ENCODE measurements at regions of chr4 and their contacts with region 1.

Region 1: DNA sequence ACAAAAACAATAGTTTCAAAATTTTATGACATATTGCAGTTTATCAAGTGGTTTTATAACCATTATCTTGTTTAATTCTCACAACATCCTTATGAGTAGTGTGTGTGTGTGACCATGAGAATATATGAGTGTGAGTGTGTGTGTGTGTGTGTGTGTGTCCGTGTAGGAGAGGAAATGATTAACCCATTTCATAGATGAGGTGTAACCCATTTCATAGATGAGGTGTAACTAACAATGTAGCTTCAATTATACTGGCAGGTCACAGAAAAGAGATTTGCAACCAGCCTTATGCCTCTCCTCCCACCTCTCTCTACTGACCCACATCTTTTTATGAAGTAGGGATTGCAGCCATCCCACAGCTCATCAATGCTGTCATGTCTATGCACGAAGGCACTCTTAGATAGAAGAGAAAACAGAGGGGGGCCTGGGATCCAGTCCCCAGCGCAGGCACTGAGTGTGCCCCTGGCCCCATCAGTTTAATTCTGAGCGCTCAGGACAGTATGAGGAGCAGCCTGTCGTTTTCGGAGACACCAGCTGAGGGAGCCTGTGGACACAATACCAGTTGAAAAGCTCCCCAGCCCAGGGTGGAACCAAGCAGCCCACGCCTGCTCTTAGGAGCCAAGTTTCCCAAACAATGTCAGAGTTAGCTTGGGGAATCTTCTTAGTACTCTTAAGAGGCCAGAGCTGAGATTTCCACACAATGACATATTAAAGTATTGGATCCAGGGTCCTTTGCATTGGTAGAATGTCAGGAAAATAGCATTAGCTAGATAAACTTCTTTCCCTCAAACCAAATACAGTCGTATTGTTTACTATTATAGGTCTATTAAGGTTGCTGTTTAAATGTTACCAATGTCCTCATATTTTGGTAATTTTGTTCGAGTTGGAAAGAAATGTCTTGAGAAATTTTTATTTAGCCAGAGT is 88.6 kb downstream of the PALLD start:
- DNase-seq: peak; percentile 85 to 93 (median 87)
- ATAC-seq: peak; percentile 92 to 93
- H3K4me3 ChIP-seq: no peak overlapping the region
- H3K27ac ChIP-seq: no peak overlapping the region
- H3K4me1 ChIP-seq: peaks cover 6% of the 10 kb centered on the region
- H3K27me3 ChIP-seq: no peaks in the 10 kb centered on the region

Region 2: DNA sequence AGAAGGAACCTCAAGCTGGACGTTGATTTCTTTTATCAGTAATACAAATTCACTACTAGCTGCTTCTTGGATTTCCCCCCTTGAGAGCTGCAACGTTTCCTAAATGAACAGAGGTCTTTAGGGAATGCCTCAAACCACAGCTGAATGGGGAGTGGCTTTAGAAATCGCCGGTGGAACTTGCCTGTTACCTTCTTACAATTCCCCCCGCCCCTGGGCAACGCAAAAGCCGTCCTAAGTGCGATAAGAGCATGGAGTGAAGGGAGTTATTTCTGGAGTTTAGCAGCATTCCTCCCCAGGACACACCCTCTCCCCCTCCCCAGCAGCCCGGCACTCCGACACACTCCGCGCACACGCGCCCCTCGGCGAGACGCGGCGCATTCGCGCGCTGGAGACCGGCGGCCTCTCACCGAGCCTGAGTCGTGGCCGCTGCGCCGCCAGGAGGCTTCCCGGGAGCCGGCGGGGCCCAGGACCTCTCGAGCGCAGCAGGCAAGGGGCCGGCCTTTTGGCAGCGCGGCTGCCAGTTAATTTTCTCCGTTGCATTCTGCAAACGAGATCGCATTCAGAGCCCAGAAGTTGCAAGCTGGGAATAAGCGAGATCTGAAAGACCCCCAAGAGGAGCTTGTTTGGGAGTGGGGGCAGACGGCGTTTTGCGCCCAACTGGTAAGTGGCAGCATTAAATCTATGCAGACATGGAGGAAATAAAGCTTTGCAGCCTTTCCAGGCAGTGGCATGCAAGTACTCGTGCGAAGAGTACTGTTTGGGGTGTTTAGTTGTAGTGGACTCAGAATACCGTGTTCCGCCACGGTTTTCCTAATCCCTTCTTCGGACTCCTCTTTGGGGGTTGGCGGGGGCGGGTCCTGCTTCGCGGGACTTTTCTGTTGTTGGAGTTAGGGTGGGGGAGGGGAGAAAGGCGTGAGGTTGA is 46.1 kb after region 1 on chr4:
- intact Hi-C with region 1: loop called in 2 of 4 experiments (anchors 10 kb)
- DNase-seq: peak; percentile 61 to 87 (median 86)
- ATAC-seq: peak; percentile 88 to 92
- H3K4me3 ChIP-seq: peak overlapping the region; percentile 60
- H3K27ac ChIP-seq: peak overlapping the region; percentile 80
- H3K4me1 ChIP-seq: peaks cover 7% of the 10 kb centered on the region
- H3K27me3 ChIP-seq: no peaks in the 10 kb centered on the region

Measured in right cardiac atrium (tissue), 5 donors.